ENCODE measurements at regions of chr1 and their contacts with region 1.

Region 1: GRCh38 chr1:22749919-22750688 is 39.5 kb downstream of the EPHB2 start:
- DNase-seq: peak; percentile 83
- H3K4me3 ChIP-seq: no peak overlapping the region
- H3K27ac ChIP-seq: peak overlapping the region; percentile 59
- H3K4me1 ChIP-seq: peaks cover 39% of the 10 kb centered on the region
- H3K27me3 ChIP-seq: no peaks in the 10 kb centered on the region
- CTCF ChIP-seq: no peak

Region 2: GRCh38 chr1:22600071-22600816 is 149.9 kb before region 1 on chr1:
- CTCF ChIA-PET with region 1: no interaction called
- dilution Hi-C with region 1: loop called (anchors 5 kb)
- in situ Hi-C with region 1: no loop called
- intact Hi-C with region 1: no loop called
- DNase-seq: no peak
- H3K4me3 ChIP-seq: no peak overlapping the region
- H3K27ac ChIP-seq: no peak overlapping the region
- H3K4me1 ChIP-seq: no peaks in the 10 kb centered on the region
- H3K27me3 ChIP-seq: peaks cover 5% of the 10 kb centered on the region
- CTCF ChIP-seq: no peak

Region 3: GRCh38 chr1:22709891-22710700 is 40.0 kb before region 1 on chr1:
- CTCF ChIA-PET with region 1: no interaction called
- dilution Hi-C with region 1: loop called (anchors 5 kb)
- in situ Hi-C with region 1: no loop called
- intact Hi-C with region 1: loop called (anchors 5 kb)
- DNase-seq: peak; percentile 19
- H3K4me3 ChIP-seq: peak overlapping the region; percentile 23 to 43 (median 43)
- H3K27ac ChIP-seq: no peak overlapping the region
- H3K4me1 ChIP-seq: peaks cover 2% of the 10 kb centered on the region
- H3K27me3 ChIP-seq: peaks cover 4% of the 10 kb centered on the region
- CTCF ChIP-seq: no peak

Region 4: DNA sequence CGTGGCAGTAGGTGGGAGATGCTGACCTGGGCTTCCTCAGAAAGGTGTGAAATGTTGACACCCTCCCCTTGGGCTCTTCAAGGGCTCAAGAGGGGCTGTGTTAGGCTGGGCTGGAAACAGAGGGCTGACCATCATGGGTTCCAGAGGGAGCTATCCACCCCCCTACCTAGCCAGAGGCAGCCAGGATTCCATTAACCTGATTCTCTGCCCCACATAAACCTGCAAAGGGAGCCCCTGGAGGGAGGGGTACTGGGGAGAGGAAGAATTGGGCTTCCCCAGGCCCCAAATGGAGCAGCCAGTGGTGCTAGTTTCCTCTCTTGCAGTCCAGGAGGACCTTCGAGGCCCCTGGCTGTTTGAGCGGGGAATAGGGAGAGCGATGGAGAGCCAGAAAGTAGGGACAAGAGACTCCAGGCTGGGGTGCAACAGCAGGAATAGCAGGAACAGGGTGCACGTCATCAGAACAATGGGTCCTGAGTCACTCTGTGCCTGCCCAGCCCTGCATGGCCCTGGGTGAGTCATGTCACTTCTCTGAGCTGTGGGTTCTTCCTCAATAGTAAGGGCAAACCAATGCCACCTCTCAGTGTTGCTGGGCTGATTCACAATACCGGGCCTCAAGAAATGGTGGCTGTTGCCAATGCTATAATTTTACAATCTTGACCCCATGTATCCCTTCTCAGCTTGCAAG is 81.8 kb after region 1 on chr1:
- CTCF ChIA-PET with region 1: no interaction called
- dilution Hi-C with region 1: no loop called
- in situ Hi-C with region 1: no loop called
- intact Hi-C with region 1: loop called (anchors 2 kb)
- DNase-seq: peak; percentile 98
- H3K4me3 ChIP-seq: no peak overlapping the region
- H3K27ac ChIP-seq: peak overlapping the region; percentile 81
- H3K4me1 ChIP-seq: peaks cover 63% of the 10 kb centered on the region
- H3K27me3 ChIP-seq: no peaks in the 10 kb centered on the region
- CTCF ChIP-seq: no peak

Region 5: GRCh38 chr1:22861764-22862440 is 111.8 kb after region 1 on chr1:
- CTCF ChIA-PET with region 1: no interaction called
- dilution Hi-C with region 1: no loop called
- in situ Hi-C with region 1: no loop called
- intact Hi-C with region 1: loop called (anchors 1 kb)
- DNase-seq: peak; percentile 86
- H3K4me3 ChIP-seq: no peak overlapping the region
- H3K27ac ChIP-seq: peak overlapping the region; percentile 45
- H3K4me1 ChIP-seq: peaks cover 14% of the 10 kb centered on the region
- H3K27me3 ChIP-seq: no peaks in the 10 kb centered on the region
- CTCF ChIP-seq: peak; percentile 89 to 91

Region 6: GRCh38 chr1:22889213-22889827 is 139.2 kb after region 1 on chr1:
- CTCF ChIA-PET with region 1: no interaction called
- dilution Hi-C with region 1: loop called (anchors 10 kb)
- in situ Hi-C with region 1: no loop called
- intact Hi-C with region 1: loop called (anchors 2 kb)
- DNase-seq: no peak
- H3K4me3 ChIP-seq: no peak overlapping the region
- H3K27ac ChIP-seq: no peak overlapping the region
- H3K4me1 ChIP-seq: no peaks in the 10 kb centered on the region
- H3K27me3 ChIP-seq: no peaks in the 10 kb centered on the region
- CTCF ChIP-seq: peak; percentile 83 to 91